Posterior cingulate gyrus (tissue), 11 donors: ENCODE measurements at regions of chr22 and their contacts with region 1.

Region 1: GRCh38 chr22:23970816-23971486 is 3.3 kb downstream of the DDT start:
- DNase-seq: no peak

Region 2: GRCh38 chr22:23816156-23816976 is 154.6 kb before region 1 on chr22:
- intact Hi-C with region 1: no loop called
- DNase-seq: peak in 9 of 10 donors; percentile 43 to 92 (median 59)

Region 3: GRCh38 chr22:23913661-23914353 is 57.1 kb before region 1 on chr22:
- intact Hi-C with region 1: loop called (anchors 10 kb)
- DNase-seq: peak; percentile 99 to 100 (median 100)

Region 4: GRCh38 chr22:24027389-24027975 is 56.5 kb after region 1 on chr22:
- intact Hi-C with region 1: no loop called
- DNase-seq: no peak